Activated CD4-positive, alpha-beta memory T cell treated with anti-CD3 and anti-CD28 coated beads for 36 hours (primary cell): ENCODE measurements at regions of chr7 and their contacts with region 1.

Region 1: GRCh38 chr7:158818325-158819213 is 10.7 kb downstream of the ESYT2 start:
- DNase-seq: peak; percentile 85
- H3K4me3 Mint-ChIP-seq: peak overlapping the region; percentile 78
- H3K27ac Mint-ChIP-seq: peak overlapping the region; percentile 95
- H3K4me1 Mint-ChIP-seq: peaks cover 85% of the 10 kb centered on the region
- H3K27me3 Mint-ChIP-seq: no peaks in the 10 kb centered on the region

Region 2: GRCh38 chr7:158431941-158432347 is 386.6 kb before region 1 on chr7:
- CTCF ChIA-PET with region 1: no interaction called
- POLR2A ChIA-PET with region 1: no interaction called
- intact Hi-C with region 1: no loop called
- DNase-seq: no peak
- H3K4me3 Mint-ChIP-seq: no peak overlapping the region
- H3K27ac Mint-ChIP-seq: no peak overlapping the region
- H3K4me1 Mint-ChIP-seq: no peaks in the 10 kb centered on the region
- H3K27me3 Mint-ChIP-seq: peaks cover 8% of the 10 kb centered on the region

Region 3: DNA sequence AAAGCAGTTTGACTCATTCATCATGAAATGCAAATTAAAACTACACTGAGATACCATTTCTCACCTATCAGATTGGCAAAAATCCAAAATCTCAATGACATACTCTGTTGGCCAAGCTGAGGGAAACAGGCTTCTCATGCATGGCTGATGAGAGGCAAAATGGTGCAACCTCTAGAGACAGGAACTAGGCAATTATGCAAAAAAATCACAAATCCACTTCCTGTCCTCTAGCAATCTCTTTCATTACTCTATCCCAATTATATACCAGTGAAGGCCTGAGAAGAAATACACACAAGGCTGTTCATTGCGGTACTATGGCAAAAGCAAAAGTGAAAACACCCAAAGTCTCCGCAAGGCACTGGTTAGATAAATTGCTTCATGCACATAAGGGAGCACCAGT is 205.1 kb before region 1 on chr7:
- CTCF ChIA-PET with region 1: no interaction called
- POLR2A ChIA-PET with region 1: no interaction called
- intact Hi-C with region 1: no loop called
- DNase-seq: no peak
- H3K4me3 Mint-ChIP-seq: no peak overlapping the region
- H3K27ac Mint-ChIP-seq: no peak overlapping the region
- H3K4me1 Mint-ChIP-seq: peaks cover 11% of the 10 kb centered on the region
- H3K27me3 Mint-ChIP-seq: no peaks in the 10 kb centered on the region

Region 4: GRCh38 chr7:158704704-158705468 is 113.7 kb before region 1 on chr7 and contains the start of gene NCAPG2:
- CTCF ChIA-PET with region 1: no interaction called
- POLR2A ChIA-PET with region 1: interaction called, 4 read pairs
- intact Hi-C with region 1: loop called (anchors 2 kb)
- DNase-seq: peak; percentile 98
- H3K4me3 Mint-ChIP-seq: peak within 1 kb of the TSS; percentile 84
- H3K27ac Mint-ChIP-seq: peak within 1 kb of the TSS; percentile 82
- H3K4me1 Mint-ChIP-seq: peaks cover 40% of the 10 kb centered on the region
- H3K27me3 Mint-ChIP-seq: no peaks in the 10 kb centered on the region
- total RNA-seq, gene NCAPG2: 145 to 149 TPM

Region 5: DNA sequence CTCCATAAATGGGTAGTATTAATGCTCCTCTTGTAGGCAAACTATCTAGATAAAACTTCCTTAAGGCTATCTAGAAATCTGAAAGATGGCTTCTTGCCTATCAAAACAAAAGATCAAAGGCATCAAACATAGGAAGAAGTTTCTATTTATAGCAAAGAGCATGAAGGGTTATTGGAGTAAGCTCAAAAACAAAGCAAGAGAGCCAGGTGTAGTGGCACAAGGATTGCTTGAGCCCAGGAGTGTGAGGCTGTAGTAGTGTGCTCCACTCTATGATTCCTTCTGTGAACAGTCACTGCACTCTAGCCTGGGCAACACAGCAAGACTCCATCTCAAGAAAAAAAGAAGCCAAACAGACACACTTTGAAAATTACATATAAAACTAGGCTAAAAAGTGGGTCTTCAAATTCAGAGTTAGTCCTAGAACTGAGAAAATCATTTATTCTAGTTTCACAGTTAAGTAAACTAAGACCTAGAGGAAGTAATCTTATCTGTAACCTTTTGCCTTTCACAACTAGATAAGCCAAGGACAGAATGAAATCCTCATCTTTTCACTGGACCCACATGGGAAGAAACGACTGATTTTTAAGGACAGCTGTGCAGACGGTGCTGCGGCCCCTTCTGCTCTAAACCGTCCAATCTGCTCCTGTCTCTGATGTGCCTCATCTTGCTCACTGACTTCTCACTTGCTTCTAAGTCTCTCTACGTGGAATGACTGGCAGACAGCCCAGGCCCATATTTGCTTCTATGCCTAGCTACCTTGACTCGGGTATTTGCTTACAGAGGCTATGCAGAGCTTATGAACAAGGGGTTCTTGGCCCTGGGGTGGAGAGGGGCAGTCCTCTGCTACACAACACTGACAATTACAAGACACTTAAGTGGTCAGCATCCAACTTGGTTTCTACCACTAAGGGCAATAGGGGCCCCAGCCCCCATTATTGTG is 39.2 kb before region 1 on chr7:
- CTCF ChIA-PET with region 1: interaction called, 3 read pairs
- POLR2A ChIA-PET with region 1: no interaction called
- intact Hi-C with region 1: loop called (anchors 5 kb)
- DNase-seq: no peak
- H3K4me3 Mint-ChIP-seq: no peak overlapping the region
- H3K27ac Mint-ChIP-seq: peak overlapping the region; percentile 49
- H3K4me1 Mint-ChIP-seq: peaks cover 24% of the 10 kb centered on the region
- H3K27me3 Mint-ChIP-seq: no peaks in the 10 kb centered on the region